Heart left ventricle (tissue), 16 donors: ENCODE measurements at regions of chr4 and their contacts with region 1.

Region 1: DNA sequence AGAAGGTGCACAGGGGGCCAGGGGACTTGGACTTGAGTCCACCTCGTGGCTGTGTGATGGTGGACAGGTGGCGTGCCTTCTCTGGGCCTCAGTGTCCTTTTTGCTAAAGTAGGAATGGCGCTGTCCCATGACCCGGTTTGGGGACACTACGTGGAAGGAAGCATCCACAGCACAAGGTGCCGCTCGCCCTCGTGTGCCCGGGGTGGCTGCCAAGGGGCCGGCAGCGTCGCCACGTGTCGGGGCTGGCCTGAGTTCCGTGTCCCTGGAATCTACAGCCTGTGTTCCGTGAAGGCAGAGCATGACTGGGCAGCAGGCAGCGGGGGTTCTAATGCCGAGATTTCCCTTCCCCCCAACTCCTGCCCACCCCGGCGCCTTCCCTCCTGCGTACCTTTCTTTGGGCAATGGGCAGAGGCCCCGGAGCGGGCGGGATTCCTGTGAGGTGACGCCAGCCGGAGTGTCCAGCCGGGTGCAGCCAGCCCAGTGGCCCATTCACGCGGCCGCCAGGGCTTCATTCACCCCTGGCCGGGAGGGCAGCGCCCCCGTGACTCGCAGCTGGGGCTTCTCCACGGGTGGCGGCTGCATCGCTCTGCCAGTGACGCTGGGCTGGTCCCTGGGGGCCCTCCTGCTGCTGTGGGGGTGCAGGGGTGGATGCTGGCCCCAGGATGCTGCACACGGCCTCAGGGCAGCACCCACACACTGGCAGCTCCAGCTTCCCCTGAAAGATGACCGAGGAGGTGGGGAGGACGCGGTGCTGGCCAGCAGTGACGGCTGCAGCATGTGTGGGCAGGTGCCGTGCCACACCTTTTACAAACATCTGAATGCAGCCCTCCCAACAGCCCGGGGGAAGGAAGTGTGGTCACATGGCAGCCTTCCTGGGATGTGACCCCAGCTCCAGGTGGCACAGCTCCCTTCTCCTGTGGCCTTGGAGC is 21.2 kb downstream of the DOK7 start:
- DNase-seq: peak; percentile 77 to 92 (median 85)
- ATAC-seq: peak; percentile 58 to 66 (median 64)
- H3K4me3 ChIP-seq: peak overlapping the region in 1 of 12 donors; percentile 17
- H3K27ac ChIP-seq: peak overlapping the region; percentile 83 to 100 (median 94)
- H3K4me1 ChIP-seq: peaks cover 0 to 89% (median 50%) of the 10 kb centered on the region in 12 donors
- H3K27me3 ChIP-seq: peaks cover 0 to 35% (median 3%) of the 10 kb centered on the region in 9 donors
- CTCF ChIP-seq: no peak
- POLR2A ChIP-seq: no peak

Region 2: DNA sequence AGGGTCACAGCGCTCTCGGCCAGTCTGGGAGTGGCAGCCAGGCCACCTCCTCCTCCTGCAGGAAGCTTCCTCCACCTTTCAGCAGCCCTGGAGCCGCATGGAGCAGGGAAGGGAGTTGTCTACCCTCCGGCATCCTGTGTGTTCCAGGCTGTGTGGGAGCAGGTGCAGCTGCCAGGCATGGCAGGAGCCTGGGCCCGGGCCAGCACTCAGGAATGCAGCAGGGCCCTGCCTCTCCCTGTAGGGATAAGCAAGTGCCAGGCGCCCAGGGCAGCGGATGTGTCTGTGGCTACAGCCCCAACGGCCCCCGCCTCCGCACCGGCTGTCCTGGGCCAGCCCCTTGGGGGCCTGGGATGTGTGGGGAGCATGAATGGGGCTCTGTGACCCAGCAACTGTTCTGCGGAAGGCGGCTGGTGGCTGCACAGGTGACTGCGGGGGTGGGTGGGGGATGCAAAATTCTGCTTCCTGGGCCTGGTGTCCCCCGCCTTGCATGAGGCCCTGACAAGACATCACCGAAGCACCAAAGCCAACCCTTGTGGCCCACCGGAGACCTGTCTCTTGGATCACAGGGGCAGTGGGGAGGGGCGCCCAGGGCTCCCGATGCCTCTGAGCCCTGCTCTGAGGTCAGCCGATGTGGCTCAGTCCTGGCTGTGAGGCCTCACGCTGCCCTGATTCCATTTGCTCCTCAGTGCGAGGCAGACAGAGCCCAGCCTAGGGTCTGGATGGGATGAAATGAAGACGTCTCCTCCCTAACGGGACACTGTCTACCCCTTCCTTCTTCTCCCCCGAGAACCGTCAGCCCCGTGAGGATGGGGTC is 22.6 kb before region 1 on chr4:
- intact Hi-C with region 1: loop called in 3 of 10 experiments (anchors 2 kb)
- DNase-seq: peak; percentile 79 to 91 (median 86)
- ATAC-seq: peak; percentile 74 to 90 (median 81)
- H3K4me3 ChIP-seq: no peak overlapping the region
- H3K27ac ChIP-seq: peak overlapping the region in 11 of 12 donors; percentile 27 to 98 (median 90)
- H3K4me1 ChIP-seq: peaks cover 0 to 46% (median 14%) of the 10 kb centered on the region in 12 donors
- H3K27me3 ChIP-seq: peaks cover 0 to 24% (median 9%) of the 10 kb centered on the region in 9 donors
- CTCF ChIP-seq: no peak
- POLR2A ChIP-seq: no peak

Region 3: GRCh38 chr4:3531879-3532713 is 47.8 kb after region 1 on chr4 and contains the start of gene LRPAP1:
- intact Hi-C with region 1: loop called in 1 of 10 experiments (anchors 1 kb)
- DNase-seq: peak; percentile 92 to 97 (median 94)
- ATAC-seq: peak; percentile 89 to 94 (median 93)
- H3K4me3 ChIP-seq: peak within 1 kb of the TSS; percentile 66 to 97 (median 86)
- H3K27ac ChIP-seq: peak within 1 kb of the TSS in 11 of 12 donors; percentile 51 to 84 (median 77)
- H3K4me1 ChIP-seq: peaks cover 0 to 40% (median 23%) of the 10 kb centered on the region in 12 donors
- H3K27me3 ChIP-seq: no peaks in the 10 kb centered on the region
- CTCF ChIP-seq: peak in 2 of 12 donors; percentile 6 to 11
- POLR2A ChIP-seq: peak; percentile 78 to 97
- total RNA-seq, gene LRPAP1: 221 to 389 (median 283) TPM